ENCODE measurements at regions of chr7 and their contacts with region 1.

Region 1: DNA sequence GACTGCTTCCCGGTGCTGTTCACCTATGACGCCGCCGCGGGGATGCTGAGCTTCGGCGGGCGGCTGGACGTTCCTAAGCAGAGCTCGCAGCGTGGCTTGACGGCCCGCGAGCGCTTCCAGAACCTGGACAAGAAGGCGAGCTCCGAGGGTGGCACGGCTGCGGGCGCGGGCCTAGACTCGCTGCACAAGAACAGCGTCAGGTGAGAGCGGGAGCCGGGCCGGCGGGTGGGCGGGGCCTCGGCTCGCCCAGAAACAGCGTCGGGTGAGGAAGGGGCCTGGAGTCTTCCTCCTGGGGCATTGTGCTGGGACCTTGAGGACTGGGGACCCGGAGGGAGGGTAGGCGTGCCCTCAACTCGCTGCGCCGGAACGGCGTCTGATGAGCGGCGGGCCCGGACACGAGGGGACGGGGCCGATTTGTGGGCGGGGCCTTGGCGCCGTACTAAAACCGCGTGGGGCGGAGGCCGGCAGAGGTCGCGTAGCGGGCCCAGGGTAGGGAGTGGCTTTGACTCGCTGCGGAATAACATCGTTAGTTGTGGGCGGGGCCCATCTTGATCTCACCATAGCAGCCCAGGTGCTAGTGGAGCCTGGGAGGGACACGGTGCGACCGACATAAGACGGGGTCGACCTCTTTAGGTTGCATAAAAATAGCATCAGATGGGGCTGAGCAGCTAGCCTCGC is 15.6 kb downstream of the PDAP1 start:
- DNase-seq: peak; percentile 80
- ATAC-seq: peak; percentile 77 to 90 (median 86)
- H3K4me3 ChIP-seq: peak overlapping the region; percentile 20 to 85 (median 60)
- H3K27ac ChIP-seq: peak overlapping the region; percentile 13 to 77 (median 73)
- H3K4me1 ChIP-seq: peaks cover 3 to 24% (median 21%) of the 10 kb centered on the region in 9 donors
- H3K27me3 ChIP-seq: no peaks in the 10 kb centered on the region
- CTCF ChIP-seq: peak in 4 of 9 donors; percentile 8 to 28 (median 16)

Region 2: DNA sequence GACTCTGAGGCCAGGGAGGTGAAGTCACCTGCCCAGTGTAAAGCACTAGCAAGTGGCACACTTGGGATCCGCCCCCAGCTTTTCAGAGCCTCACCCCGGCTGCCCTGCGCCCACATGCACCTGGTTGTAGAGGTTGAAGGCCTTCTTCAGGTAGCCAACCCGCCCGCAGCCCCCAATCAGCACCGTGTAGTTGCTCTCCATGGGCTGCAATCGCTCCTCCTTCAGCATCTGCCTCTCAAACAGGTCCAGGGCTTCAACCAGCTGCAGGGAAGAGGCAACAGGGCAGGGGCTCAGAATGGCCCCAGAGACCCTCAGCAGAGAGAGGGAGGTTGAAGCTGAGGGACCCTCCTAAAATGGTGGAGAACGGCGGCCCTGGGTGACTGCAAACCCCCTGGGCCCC is 40.3 kb after region 1 on chr7:
- intact Hi-C with region 1: loop called in 1 of 10 experiments (anchors 1 kb)
- DNase-seq: no peak
- ATAC-seq: no peak
- H3K4me3 ChIP-seq: no peak overlapping the region
- H3K27ac ChIP-seq: no peak overlapping the region
- H3K4me1 ChIP-seq: peaks cover 2 to 9% (median 8%) of the 10 kb centered on the region in 9 donors
- H3K27me3 ChIP-seq: no peaks in the 10 kb centered on the region
- CTCF ChIP-seq: no peak